Gastrocnemius medialis (tissue), 4 donors: ENCODE measurements at regions of chr7 and their contacts with region 1.

Region 1: GRCh38 chr7:66493235-66494181 is 135.2 kb upstream of the KCTD7 start:
- DNase-seq: peak; percentile 97 to 98
- ATAC-seq: peak; percentile 95 to 97
- H3K4me3 ChIP-seq: peak overlapping the region; percentile 78 to 95 (median 88)
- H3K27ac ChIP-seq: peak overlapping the region; percentile 87 to 95 (median 92)
- H3K4me1 ChIP-seq: peaks cover 5 to 10% of the 10 kb centered on the region in 2 donors
- H3K27me3 ChIP-seq: no peaks in the 10 kb centered on the region
- CTCF ChIP-seq: peak in 4 of 5 experiments; percentile 10 to 55 (median 38)
- POLR2A ChIP-seq: peak; percentile 91 to 94

Region 2: GRCh38 chr7:66033471-66034385 is 459.8 kb before region 1 on chr7:
- in situ Hi-C with region 1: no loop called
- intact Hi-C with region 1: loop called (anchors 5 kb)
- DNase-seq: no peak
- ATAC-seq: no peak
- H3K4me3 ChIP-seq: no peak overlapping the region
- H3K27ac ChIP-seq: no peak overlapping the region
- H3K4me1 ChIP-seq: no peaks in the 10 kb centered on the region
- H3K27me3 ChIP-seq: no peaks in the 10 kb centered on the region
- CTCF ChIP-seq: no peak
- POLR2A ChIP-seq: no peak

Region 3: GRCh38 chr7:66413379-66414114 is 80.0 kb before region 1 on chr7:
- in situ Hi-C with region 1: no loop called
- intact Hi-C with region 1: loop called (anchors 2 kb)
- DNase-seq: peak; percentile 28 to 62
- ATAC-seq: peak; percentile 75 to 83
- H3K4me3 ChIP-seq: peak overlapping the region; percentile 57 to 80 (median 58)
- H3K27ac ChIP-seq: peak overlapping the region; percentile 38 to 72 (median 60)
- H3K4me1 ChIP-seq: peaks cover 0 to 7% of the 10 kb centered on the region in 2 donors
- H3K27me3 ChIP-seq: no peaks in the 10 kb centered on the region
- CTCF ChIP-seq: peak in 4 of 5 experiments; percentile 10 to 32 (median 30)
- POLR2A ChIP-seq: no peak

Region 4: GRCh38 chr7:66443946-66444345 is 49.6 kb before region 1 on chr7:
- in situ Hi-C with region 1: no loop called
- intact Hi-C with region 1: no loop called
- DNase-seq: no peak
- ATAC-seq: no peak
- H3K4me3 ChIP-seq: no peak overlapping the region
- H3K27ac ChIP-seq: no peak overlapping the region
- H3K4me1 ChIP-seq: no peaks in the 10 kb centered on the region
- H3K27me3 ChIP-seq: no peaks in the 10 kb centered on the region
- CTCF ChIP-seq: no peak
- POLR2A ChIP-seq: no peak

Region 5: GRCh38 chr7:66681491-66682349 is 188.2 kb after region 1 on chr7:
- in situ Hi-C with region 1: no loop called
- intact Hi-C with region 1: loop called (anchors 1 kb)
- DNase-seq: peak; percentile 93 to 94
- ATAC-seq: peak; percentile 98 to 99
- H3K4me3 ChIP-seq: peak overlapping the region; percentile 80 to 100 (median 98)
- H3K27ac ChIP-seq: peak overlapping the region; percentile 98 to 100 (median 99)
- H3K4me1 ChIP-seq: peaks cover 12 to 20% of the 10 kb centered on the region in 2 donors
- H3K27me3 ChIP-seq: no peaks in the 10 kb centered on the region
- CTCF ChIP-seq: peak in 1 of 5 experiments; percentile 6
- POLR2A ChIP-seq: peak; percentile 95 to 96